Mammary epithelial cell (primary cell): ENCODE measurements at regions of chr6 and their contacts with region 1.

Region 1: GRCh38 chr6:119006972-119007371 is 71.5 kb downstream of the FAM184A start:
- DNase-seq: no peak
- H3K4me3 ChIP-seq: no peak overlapping the region
- H3K27ac ChIP-seq: no peak overlapping the region
- H3K4me1 ChIP-seq: no peaks in the 10 kb centered on the region
- H3K27me3 ChIP-seq: no peaks in the 10 kb centered on the region
- CTCF ChIP-seq: no peak

Region 2: GRCh38 chr6:119090256-119090655 is 83.3 kb after region 1 on chr6:
- CTCF ChIA-PET with region 1: no interaction called
- dilution Hi-C with region 1: loop called (anchors 5 kb)
- in situ Hi-C with region 1: no loop called
- intact Hi-C with region 1: no loop called
- DNase-seq: no peak
- H3K4me3 ChIP-seq: no peak overlapping the region
- H3K27ac ChIP-seq: no peak overlapping the region
- H3K4me1 ChIP-seq: no peaks in the 10 kb centered on the region
- H3K27me3 ChIP-seq: no peaks in the 10 kb centered on the region
- CTCF ChIP-seq: no peak